ENCODE measurements at regions of chr14 and their contacts with region 1.

Region 1: GRCh38 chr14:92106143-92106926 is at the start of gene ATXN3:
- DNase-seq: peak; percentile 97
- H3K4me3 ChIP-seq: peak within 1 kb of the TSS; percentile 79 to 97 (median 96)
- H3K27ac ChIP-seq: peak within 1 kb of the TSS; percentile 92 to 100 (median 96)
- H3K4me1 ChIP-seq: peaks cover 8 to 38% (median 19%) of the 10 kb centered on the region in 4 donors
- H3K27me3 ChIP-seq: no peaks in the 10 kb centered on the region
- CTCF ChIP-seq: peak; percentile 60 to 76 (median 66)
- EP300 ChIP-seq: no peak
- POLR2A ChIP-seq: peak; percentile 56
- total RNA-seq, gene ATXN3: 17.1 to 35.6 (median 25.9) TPM

Region 2: DNA sequence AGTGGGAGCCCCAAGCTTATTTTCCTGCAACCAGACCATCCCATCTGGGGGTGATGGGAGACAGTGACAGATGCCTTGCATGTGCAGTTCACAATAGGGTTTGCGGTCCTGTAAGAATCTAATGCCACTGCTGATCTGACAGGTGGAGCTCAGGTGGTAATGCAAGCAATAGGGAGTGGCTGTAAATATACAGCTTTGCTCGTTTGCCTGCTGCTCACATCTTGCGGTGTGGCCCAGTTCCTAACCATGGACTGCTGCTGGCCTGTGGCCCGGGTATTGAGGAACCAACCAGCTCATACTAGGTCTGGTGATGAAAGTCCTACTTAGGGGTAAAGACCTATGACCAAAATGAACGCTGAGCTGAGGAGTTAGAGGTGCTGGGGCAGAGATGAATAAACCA is 652.6 kb before region 1 on chr14:
- in situ Hi-C with region 1: no loop called
- intact Hi-C with region 1: loop called (anchors 5 kb)
- DNase-seq: peak; percentile 17
- H3K4me3 ChIP-seq: no peak overlapping the region
- H3K27ac ChIP-seq: no peak overlapping the region
- H3K4me1 ChIP-seq: no peaks in the 10 kb centered on the region
- H3K27me3 ChIP-seq: no peaks in the 10 kb centered on the region
- CTCF ChIP-seq: no peak
- EP300 ChIP-seq: no peak
- POLR2A ChIP-seq: no peak